ENCODE measurements at regions of chr5 and their contacts with region 1.

Region 1: GRCh38 chr5:142548739-142549275 is 137.1 kb downstream of the FGF1 start:
- DNase-seq: peak; percentile 80
- H3K4me3 ChIP-seq: no peak overlapping the region
- CTCF ChIP-seq: peak; percentile 74

Region 2: GRCh38 chr5:141094481-141095262 is 1454.1 kb before region 1 on chr5 and contains the start of gene PCDHB2:
- CTCF ChIA-PET with region 1: no interaction called
- POLR2A ChIA-PET with region 1: no interaction called
- DNase-seq: no peak
- H3K4me3 ChIP-seq: peak within 1 kb of the TSS; percentile 29
- CTCF ChIP-seq: no peak

Region 3: DNA sequence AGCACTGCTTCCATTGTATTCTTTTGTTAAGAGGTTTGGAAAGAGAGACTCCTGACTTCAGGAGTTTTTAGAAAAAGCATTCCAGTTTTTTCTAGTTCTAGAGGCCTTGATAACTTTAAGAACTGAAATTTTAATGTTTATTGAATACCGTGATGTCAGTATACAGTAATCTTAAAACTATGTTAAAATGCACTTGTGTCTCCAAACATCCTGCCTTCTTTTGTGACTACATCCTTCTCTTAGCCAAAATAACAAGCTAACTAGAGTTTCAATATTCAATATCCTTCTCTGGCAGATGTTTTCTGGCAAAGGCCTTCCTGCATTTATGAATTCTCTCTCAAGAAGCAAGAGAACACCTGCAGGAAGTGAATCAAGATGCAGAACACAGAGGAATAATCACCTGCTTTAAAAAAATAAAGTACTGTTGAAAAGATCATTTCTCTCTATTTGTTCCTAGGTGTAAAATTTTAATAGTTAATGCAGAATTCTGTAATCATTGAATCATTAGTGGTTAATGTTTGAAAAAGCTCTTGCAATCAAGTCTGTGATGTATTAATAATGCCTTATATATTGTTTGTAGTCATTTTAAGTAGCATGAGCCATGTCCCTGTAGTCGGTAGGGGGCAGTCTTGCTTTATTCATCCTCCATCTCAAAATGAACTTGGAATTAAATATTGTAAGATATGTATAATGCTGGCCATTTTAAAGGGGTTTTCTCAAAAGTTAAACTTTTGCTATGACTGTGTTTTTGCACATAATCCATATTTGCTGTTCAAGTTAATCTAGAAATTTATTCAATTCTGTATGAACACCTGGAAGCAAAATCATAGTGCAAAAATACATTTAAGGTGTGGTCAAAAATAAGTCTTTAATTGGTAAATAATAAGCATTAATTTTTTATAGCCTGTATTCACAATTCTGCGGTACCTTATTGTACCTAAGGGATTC is 397.1 kb before region 1 on chr5:
- CTCF ChIA-PET with region 1: interaction called, 141 read pairs
- POLR2A ChIA-PET with region 1: no interaction called
- DNase-seq: peak; percentile 41
- H3K4me3 ChIP-seq: no peak overlapping the region
- CTCF ChIP-seq: peak; percentile 62

Region 4: GRCh38 chr5:142246258-142246657 is 302.5 kb before region 1 on chr5:
- CTCF ChIA-PET with region 1: no interaction called
- POLR2A ChIA-PET with region 1: no interaction called
- DNase-seq: peak; percentile 36
- H3K4me3 ChIP-seq: no peak overlapping the region
- CTCF ChIP-seq: no peak

Region 5: DNA sequence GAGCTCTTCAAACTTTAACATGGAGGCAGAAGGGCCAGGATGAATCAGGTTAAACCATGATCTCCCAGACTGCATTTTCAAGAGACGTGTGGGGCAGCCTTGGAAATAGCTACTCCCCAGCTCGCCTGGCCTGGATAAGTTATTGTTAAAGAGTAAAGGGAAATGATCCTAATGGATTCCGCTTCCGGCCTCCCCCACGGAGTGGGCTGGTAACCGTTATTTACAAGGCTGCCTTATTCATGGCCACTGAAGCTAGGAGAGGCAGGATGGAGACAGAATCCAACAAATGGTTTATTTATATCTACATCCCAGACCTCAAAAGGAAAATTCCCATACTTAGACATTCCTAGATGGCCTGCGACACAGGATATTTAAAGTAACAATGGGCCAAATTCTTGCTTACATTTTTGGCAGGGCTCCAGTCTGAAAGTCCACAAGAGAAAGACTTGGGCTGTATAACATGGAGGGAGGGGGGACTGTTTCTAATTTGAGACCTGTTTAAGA is 251.8 kb before region 1 on chr5:
- CTCF ChIA-PET with region 1: interaction called, 13 read pairs
- POLR2A ChIA-PET with region 1: no interaction called
- DNase-seq: peak; percentile 71
- H3K4me3 ChIP-seq: no peak overlapping the region
- CTCF ChIP-seq: no peak

Region 6: GRCh38 chr5:142324871-142325724 is 223.7 kb before region 1 on chr5 and contains the start of gene SPRY4:
- CTCF ChIA-PET with region 1: interaction called, 193 read pairs
- POLR2A ChIA-PET with region 1: interaction called, 3 read pairs
- DNase-seq: peak; percentile 84
- H3K4me3 ChIP-seq: peak within 1 kb of the TSS; percentile 81
- CTCF ChIP-seq: peak; percentile 20

Region 7: GRCh38 chr5:142356716-142357473 is 191.9 kb before region 1 on chr5:
- CTCF ChIA-PET with region 1: interaction called, 28 read pairs
- POLR2A ChIA-PET with region 1: no interaction called
- DNase-seq: no peak
- H3K4me3 ChIP-seq: peak overlapping the region; percentile 61
- CTCF ChIP-seq: no peak

Region 8: GRCh38 chr5:142561486-142562097 is 12.8 kb after region 1 on chr5:
- CTCF ChIA-PET with region 1: interaction called, 26 read pairs
- POLR2A ChIA-PET with region 1: no interaction called
- DNase-seq: no peak
- H3K4me3 ChIP-seq: no peak overlapping the region
- CTCF ChIP-seq: no peak

Region 9: DNA sequence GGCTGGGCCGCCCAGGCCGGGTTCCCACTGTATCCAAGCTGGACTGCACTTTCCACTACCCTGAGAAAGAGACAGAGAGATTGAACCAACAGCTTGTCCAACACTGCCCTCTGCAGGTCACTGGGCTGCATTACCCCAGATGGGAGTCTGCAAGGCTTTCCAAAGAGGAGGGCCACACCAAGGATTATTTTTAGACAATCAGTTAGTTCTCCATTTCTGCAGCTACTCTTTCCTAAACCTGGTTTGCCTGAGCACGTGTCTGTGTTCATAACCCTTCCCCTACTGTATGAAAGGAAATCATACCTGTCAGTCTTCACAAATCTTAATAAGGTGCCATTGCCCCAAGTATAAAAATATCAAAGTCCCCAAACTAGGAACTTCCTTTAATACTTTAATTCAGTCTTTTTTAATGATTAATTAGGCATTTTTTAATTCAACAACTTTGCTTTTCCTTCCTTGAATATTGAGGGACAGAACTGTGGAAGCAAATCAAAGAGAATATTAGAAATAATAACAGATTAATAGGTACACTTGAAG is 150.4 kb after region 1 on chr5:
- CTCF ChIA-PET with region 1: interaction called, 89 read pairs
- POLR2A ChIA-PET with region 1: no interaction called
- DNase-seq: no peak
- H3K4me3 ChIP-seq: no peak overlapping the region
- CTCF ChIP-seq: peak; percentile 87

Measured in AG04449 (cell line).